Left cardiac atrium (tissue), 4 donors: ENCODE measurements at regions of chr2 and their contacts with region 1.

Region 1: DNA sequence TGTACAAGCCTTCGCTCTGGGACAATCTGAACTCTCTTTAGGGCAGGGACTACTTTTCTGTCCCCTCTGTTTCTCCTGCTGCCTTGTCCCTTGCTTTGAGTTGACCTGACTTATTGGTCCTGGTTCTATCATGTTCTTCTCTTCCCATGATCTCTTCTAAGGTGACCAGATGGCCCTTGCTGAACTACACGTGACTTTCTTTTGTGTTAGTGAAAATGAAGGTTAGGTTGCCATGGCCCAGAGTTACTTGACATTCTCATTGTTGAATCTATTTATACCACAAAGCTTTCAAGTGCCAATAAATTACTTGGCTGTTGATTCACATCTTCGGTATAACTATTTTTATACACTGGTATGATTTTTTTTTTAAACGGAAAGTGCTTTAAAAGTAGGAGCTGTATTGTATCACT is 24.4 kb downstream of the MRPL33 start:
- DNase-seq: no peak
- ATAC-seq: peak in 1 of 2 donors; percentile 72

Region 2: DNA sequence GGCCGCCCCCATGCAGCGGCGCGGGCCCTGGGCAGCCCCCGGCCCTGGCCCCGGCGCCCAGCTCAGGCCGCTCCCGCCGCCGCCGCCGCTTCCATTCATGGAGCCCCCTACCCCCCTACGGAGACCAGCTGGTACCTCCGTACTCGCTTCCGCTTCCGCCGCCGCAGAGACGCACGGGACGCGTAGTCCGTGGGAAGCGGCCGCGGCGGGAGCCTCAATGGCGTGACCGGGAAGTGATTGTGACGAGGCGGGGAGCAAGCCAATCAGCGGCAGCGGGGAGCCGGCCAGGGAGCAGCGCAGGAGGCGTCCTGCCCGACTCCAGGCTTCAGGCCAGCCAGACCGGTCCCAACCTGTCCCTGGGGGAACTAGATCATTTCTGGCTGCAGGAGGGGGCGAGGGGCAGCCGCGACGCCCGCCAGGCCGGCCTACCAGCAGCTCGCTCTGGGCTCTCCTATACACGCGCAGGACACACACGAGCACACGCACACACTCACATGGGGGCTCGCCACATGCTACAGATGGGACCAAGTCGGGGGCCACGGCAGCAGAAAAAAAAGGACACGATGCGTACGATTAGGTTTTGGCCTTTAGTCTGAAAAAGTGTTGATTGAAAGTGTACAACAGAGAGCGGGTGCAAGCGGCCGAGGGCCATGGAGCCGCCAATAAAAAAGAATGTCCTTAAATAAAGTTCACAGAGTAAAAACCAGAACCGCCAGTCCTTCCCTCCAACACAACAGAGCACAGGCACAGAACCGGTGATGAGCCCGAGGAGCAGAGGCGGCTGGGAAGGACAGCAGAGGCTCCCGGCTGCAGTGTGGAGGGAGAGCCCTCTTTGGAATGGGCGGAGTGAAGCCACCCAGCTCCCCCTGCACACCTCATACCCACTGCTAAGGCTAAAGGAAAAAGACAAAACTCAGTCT is 415.0 kb before region 1 on chr2 and contains the start of gene ZNF513:
- intact Hi-C with region 1: no loop called
- DNase-seq: peak; percentile 98
- ATAC-seq: peak; percentile 91 to 95
- total RNA-seq, gene ZNF513: 9.4 to 11.9 TPM

Region 3: GRCh38 chr2:27723372-27724144 is 72.3 kb before region 1 on chr2:
- intact Hi-C with region 1: loop called in 1 of 2 experiments (anchors 2 kb)
- DNase-seq: peak; percentile 75
- ATAC-seq: peak; percentile 66 to 79